HCT116 (cell line): ENCODE measurements at regions of chr1 and their contacts with region 1.

Region 1: GRCh38 chr1:86733340-86733739 is 29.0 kb downstream of the SH3GLB1 start:
- DNase-seq: no peak
- ATAC-seq: no peak
- H3K4me3 ChIP-seq: no peak overlapping the region
- H3K27ac ChIP-seq: no peak overlapping the region
- H3K4me1 ChIP-seq: no peaks in the 10 kb centered on the region
- H3K27me3 ChIP-seq: no peaks in the 10 kb centered on the region
- CTCF ChIP-seq: no peak
- POLR2A ChIP-seq: no peak
- RAD21 ChIP-seq: no peak

Region 2: DNA sequence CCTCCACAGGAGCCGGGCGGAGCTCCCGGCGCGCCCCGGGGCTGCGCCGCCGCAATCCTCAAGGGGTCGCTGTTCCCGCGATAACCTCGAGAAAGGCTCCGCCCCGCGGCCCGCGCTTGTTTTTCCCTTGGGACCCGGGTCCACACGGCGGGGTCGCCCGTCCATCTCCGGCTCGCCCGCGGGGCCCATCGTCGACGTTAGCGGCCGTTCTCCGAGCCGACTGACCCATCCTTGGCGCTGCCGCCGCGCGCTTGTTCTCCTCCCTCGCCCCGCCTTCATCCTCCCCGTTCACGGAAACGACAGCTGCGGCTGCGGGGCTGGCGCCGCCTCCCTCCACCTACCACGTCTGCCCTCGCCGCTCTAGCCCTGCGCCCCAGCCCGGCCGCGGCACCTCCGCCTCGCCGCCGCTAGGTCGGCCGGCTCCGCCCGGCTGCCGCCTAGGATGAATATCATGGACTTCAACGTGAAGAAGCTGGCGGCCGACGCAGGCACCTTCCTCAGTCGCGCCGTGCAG is 28.8 kb before region 1 on chr1 and contains the start of gene SH3GLB1:
- CTCF ChIA-PET with region 1: interaction called, 10 read pairs
- POLR2A ChIA-PET with region 1: no interaction called
- RAD21 ChIA-PET with region 1: no interaction called
- intact Hi-C with region 1: no loop called
- DNase-seq: peak; percentile 74
- ATAC-seq: peak; percentile 95
- H3K4me3 ChIP-seq: peak within 1 kb of the TSS; percentile 64 to 85
- H3K27ac ChIP-seq: peak within 1 kb of the TSS; percentile 94
- H3K4me1 ChIP-seq: peaks cover 0 to 14% of the 10 kb centered on the region in 2 experiments; a peak in 2 of 4 replicates
- H3K27me3 ChIP-seq: no peaks in the 10 kb centered on the region
- CTCF ChIP-seq: peak; percentile 61 to 86 (median 75)
- POLR2A ChIP-seq: peak; percentile 48
- RAD21 ChIP-seq: peak; percentile 53
- total RNA-seq, gene SH3GLB1: 42.4 TPM

Region 3: GRCh38 chr1:86750530-86750929 is 17.2 kb after region 1 on chr1:
- CTCF ChIA-PET with region 1: no interaction called
- POLR2A ChIA-PET with region 1: no interaction called
- RAD21 ChIA-PET with region 1: no interaction called
- intact Hi-C with region 1: no loop called
- DNase-seq: no peak
- ATAC-seq: no peak
- H3K4me3 ChIP-seq: no peak overlapping the region
- H3K27ac ChIP-seq: no peak overlapping the region
- H3K4me1 ChIP-seq: no peaks in the 10 kb centered on the region
- H3K27me3 ChIP-seq: no peaks in the 10 kb centered on the region
- CTCF ChIP-seq: no peak
- POLR2A ChIP-seq: no peak
- RAD21 ChIP-seq: no peak